CD8-positive, alpha-beta T cell (primary cell): ENCODE measurements at regions of chr2 and their contacts with region 1.

Region 1: DNA sequence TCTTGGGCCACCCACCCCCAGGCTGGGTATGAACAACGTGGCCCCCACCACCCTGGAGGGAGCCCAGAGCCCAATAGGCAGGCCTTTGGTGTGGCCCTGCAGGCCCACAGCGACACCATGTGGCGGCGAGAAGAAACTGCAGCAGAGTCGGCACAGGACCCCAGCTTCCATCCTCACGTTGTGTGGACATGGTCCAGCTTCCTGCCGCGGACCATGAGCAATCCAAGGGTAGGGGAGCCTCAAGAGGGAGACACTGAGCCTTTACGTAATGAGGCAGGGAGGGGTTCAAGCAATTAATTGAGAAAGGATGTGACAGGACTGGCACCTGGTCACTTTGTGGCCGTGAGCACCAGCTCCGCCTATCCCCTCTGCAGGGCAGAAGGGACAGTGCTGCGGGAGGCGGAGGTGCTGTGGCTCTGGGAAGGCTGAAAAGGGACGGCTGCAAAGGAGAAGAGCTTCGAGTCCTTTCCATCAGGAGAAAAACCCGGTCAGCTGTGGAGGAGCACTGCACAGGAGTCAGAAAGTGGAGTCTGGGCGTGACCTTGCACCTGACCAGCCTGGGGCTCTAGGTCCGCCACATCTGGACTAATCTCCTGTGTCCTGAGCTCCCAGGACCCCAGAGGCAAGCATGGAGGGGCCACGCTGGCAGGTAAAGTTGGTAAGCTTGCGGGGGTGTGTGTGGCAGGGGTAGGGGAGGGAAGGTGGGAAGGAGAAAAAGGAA is 44.8 kb downstream of the TMEM37 start:
- DNase-seq: peak in 7 of 9 experiments; percentile 8 to 60 (median 22)
- ATAC-seq: no peak
- H3K4me3 ChIP-seq: no peak overlapping the region
- H3K4me3 Mint-ChIP-seq: no peak overlapping the region
- H3K27ac ChIP-seq: no peak overlapping the region
- H3K27ac Mint-ChIP-seq: no peak overlapping the region
- H3K4me1 ChIP-seq: no peaks in the 10 kb centered on the region
- H3K4me1 Mint-ChIP-seq: no peaks in the 10 kb centered on the region
- H3K27me3 ChIP-seq: peaks cover 0 to 5% of the 10 kb centered on the region in 2 experiments
- H3K27me3 Mint-ChIP-seq: peaks cover 13% of the 10 kb centered on the region
- CTCF ChIP-seq: peak; percentile 74

Region 2: DNA sequence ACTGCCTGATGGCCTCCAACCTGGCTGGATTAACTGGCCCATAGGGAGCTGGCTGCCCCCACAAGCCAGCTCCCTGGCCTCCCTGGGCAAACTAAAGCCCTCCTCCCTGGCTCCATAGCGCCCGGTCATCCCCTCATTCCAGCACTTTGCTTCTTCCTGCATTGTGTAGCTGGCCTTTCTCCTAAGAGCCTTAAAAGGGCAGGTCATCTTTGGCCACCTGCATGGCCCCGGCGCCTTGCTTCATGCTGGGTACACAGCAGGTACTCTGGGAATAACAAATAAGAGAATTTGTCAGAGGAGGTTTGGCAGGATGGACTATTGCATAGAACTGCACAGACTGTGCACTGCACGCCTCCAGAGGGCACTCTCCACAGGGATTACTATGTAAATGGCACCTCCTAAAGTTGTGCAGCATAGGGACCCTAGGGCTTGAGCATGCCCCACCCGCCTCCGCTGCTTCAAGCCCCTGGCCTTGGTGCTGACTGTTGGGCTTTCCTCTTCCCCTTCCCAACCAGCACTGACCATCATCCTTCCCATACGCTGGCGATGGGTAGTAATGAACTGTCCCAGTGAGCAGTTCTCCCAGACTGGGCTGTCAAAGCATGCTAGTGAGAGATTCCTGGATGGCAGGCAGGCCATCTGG is 242.0 kb before region 1 on chr2:
- CTCF ChIA-PET with region 1: no interaction called
- POLR2A ChIA-PET with region 1: no interaction called
- intact Hi-C with region 1: loop called in 1 of 2 experiments (anchors 10 kb)
- DNase-seq: no peak
- ATAC-seq: no peak
- H3K4me3 ChIP-seq: no peak overlapping the region
- H3K4me3 Mint-ChIP-seq: no peak overlapping the region
- H3K27ac ChIP-seq: no peak overlapping the region
- H3K27ac Mint-ChIP-seq: no peak overlapping the region
- H3K4me1 ChIP-seq: no peaks in the 10 kb centered on the region
- H3K4me1 Mint-ChIP-seq: no peaks in the 10 kb centered on the region
- H3K27me3 ChIP-seq: no peaks in the 10 kb centered on the region
- H3K27me3 Mint-ChIP-seq: no peaks in the 10 kb centered on the region
- CTCF ChIP-seq: no peak

Region 3: DNA sequence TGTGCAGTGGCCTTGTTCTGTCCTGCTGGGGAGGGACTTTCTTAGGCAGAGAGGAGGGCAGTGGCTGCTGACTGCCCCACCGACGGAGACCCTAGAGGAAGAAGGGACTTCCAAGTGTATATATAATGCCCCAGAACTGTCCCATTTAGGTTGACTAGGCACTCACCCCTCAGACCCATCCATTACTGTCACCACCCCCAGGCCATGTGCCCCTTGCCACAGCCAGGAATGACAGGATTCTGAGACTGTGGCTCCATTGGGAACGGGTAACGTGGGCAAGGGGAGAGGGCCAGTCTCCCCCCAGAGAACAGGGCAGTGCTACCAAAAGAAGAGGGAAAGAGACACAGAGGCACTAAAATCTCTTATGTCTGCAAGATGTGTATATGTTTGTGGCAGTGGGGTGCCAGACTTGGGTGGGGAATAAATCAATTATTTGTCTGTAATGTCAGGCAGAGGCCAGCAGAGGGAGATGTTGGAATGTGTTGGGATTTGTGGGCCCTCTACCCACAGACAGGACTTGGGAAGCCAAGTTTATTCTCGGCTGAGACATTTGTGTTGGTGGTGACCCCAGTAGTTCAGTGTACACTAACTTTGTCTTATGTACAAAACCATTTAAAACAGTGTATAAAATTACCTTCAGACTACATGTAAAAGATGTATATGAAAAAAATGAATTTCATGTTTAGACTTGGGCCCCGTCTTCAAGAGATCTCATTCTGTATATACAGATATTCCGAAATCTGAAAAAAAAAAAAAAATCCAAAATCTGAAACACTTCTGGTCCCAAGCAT is 68.8 kb before region 1 on chr2:
- CTCF ChIA-PET with region 1: interaction called, 5 read pairs
- POLR2A ChIA-PET with region 1: no interaction called
- intact Hi-C with region 1: loop called in 1 of 2 experiments (anchors 5 kb)
- DNase-seq: peak in 5 of 9 experiments; percentile 11 to 56 (median 17)
- ATAC-seq: no peak
- H3K4me3 ChIP-seq: no peak overlapping the region
- H3K4me3 Mint-ChIP-seq: no peak overlapping the region
- H3K27ac ChIP-seq: no peak overlapping the region
- H3K27ac Mint-ChIP-seq: no peak overlapping the region
- H3K4me1 ChIP-seq: no peaks in the 10 kb centered on the region
- H3K4me1 Mint-ChIP-seq: no peaks in the 10 kb centered on the region
- H3K27me3 ChIP-seq: no peaks in the 10 kb centered on the region
- H3K27me3 Mint-ChIP-seq: peaks cover 9% of the 10 kb centered on the region
- CTCF ChIP-seq: peak; percentile 63

Region 4: GRCh38 chr2:119464981-119465380 is 11.5 kb before region 1 on chr2:
- CTCF ChIA-PET with region 1: interaction called, 10 read pairs
- POLR2A ChIA-PET with region 1: no interaction called
- intact Hi-C with region 1: no loop called
- DNase-seq: no peak
- ATAC-seq: no peak
- H3K4me3 ChIP-seq: no peak overlapping the region
- H3K4me3 Mint-ChIP-seq: no peak overlapping the region
- H3K27ac ChIP-seq: no peak overlapping the region
- H3K27ac Mint-ChIP-seq: no peak overlapping the region
- H3K4me1 ChIP-seq: no peaks in the 10 kb centered on the region
- H3K4me1 Mint-ChIP-seq: no peaks in the 10 kb centered on the region
- H3K27me3 ChIP-seq: no peaks in the 10 kb centered on the region
- H3K27me3 Mint-ChIP-seq: peaks cover 5% of the 10 kb centered on the region
- CTCF ChIP-seq: no peak